ENCODE measurements at regions of chr5 and their contacts with region 1.

Region 1: GRCh38 chr5:84382363-84383295 is 2.1 kb downstream of the EDIL3 start:
- DNase-seq: peak; percentile 32 to 83 (median 69)

Region 2: GRCh38 chr5:83927140-83927733 is 455.4 kb before region 1 on chr5:
- intact Hi-C with region 1: loop called (anchors 10 kb)
- DNase-seq: peak; percentile 42 to 94 (median 83)

Region 3: GRCh38 chr5:84228266-84228665 is 154.4 kb before region 1 on chr5:
- intact Hi-C with region 1: no loop called
- DNase-seq: no peak

Region 4: GRCh38 chr5:84287951-84288350 is 94.7 kb before region 1 on chr5:
- intact Hi-C with region 1: loop called (anchors 10 kb)
- DNase-seq: no peak

Region 5: DNA sequence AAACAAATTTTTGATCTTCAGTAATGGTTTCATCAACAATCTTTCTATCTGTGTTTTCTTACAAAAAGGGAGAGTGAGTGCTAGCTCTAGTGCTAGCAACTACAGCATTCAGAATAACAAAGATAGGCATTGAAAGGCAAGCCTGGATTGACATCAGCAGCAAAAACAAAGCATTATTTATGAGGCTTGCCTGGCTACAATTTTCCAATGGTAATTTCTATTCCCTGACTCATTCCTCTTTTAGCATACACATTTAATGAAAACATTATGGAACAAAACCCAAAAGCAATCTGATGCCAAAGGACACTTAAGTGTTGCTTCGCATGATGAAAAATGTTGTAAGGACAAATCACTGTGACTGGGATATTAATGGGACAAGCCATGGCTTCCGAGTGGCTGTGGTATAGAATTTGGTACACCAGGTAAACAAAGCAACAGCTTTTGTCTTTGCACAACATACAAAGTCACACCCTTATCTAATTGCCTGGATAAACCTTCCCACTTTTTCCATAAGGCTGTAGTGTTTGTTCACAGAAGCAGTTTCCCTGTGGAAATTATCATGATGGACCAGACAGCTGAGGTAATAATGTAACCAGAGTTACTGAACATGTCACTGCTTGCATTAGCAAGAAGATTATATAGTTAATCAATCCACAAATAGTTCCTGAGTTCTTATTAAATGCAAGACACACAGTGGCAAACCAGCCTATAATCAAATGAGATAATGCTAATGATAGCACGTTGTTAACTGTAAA is 181.9 kb after region 1 on chr5:
- intact Hi-C with region 1: loop called (anchors 5 kb)
- DNase-seq: peak in 12 of 42 donors; percentile 5 to 77 (median 44)

Measured in head of caudate nucleus (tissue), 42 donors.